Activated CD8-positive, alpha-beta T cell treated with anti-CD3 and anti-CD28 coated beads, Interleukin-2, amount 10 ng/mL, durations not matched to agents 7 days and 5 days (primary cell): ENCODE measurements at regions of chrX and their contacts with region 1.

Region 1: GRCh38 chrX:129781134-129781672 is 1.5 kb downstream of the SASH3 start:
- DNase-seq: peak; percentile 91
- ATAC-seq: peak; percentile 75
- H3K4me3 Mint-ChIP-seq: peak overlapping the region; percentile 89
- H3K27ac Mint-ChIP-seq: peak overlapping the region; percentile 94
- H3K4me1 Mint-ChIP-seq: peaks cover 55% of the 10 kb centered on the region
- H3K27me3 Mint-ChIP-seq: no peaks in the 10 kb centered on the region

Region 2: GRCh38 chrX:129654419-129655165 is 126.6 kb before region 1 on chrX and contains the start of gene APLN:
- CTCF ChIA-PET with region 1: interaction called, 11 read pairs
- POLR2A ChIA-PET with region 1: interaction called, 3 read pairs
- DNase-seq: peak; percentile 26
- ATAC-seq: peak; percentile 79
- H3K4me3 Mint-ChIP-seq: peak within 1 kb of the TSS; percentile 66
- H3K27ac Mint-ChIP-seq: no peak within 1 kb of the TSS
- H3K4me1 Mint-ChIP-seq: peaks cover 7% of the 10 kb centered on the region
- H3K27me3 Mint-ChIP-seq: peaks cover 9% of the 10 kb centered on the region
- total RNA-seq, gene APLN: 2.1 to 2.7 TPM

Region 3: DNA sequence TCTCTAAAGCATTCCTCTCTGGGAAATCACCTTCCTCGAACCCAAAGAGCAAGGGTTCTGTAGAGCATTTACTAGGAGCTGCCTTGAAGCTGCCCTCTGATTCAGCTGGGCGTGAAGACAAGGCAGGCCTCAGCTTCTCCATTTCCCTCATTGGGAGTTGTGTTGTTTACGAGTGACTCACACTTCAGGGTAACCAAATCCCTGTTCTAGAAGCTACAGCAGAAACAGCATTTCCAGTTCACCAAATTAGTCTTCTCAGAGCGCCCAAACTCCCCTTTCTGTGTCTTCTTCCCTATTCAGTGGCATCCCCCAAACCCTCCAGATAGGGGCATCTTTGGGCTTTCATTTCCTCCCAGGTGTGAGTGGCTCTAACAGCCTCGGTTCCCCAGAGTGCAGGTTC is 43.3 kb before region 1 on chrX:
- CTCF ChIA-PET with region 1: interaction called, 11 read pairs
- POLR2A ChIA-PET with region 1: interaction called, 20 read pairs
- DNase-seq: no peak
- ATAC-seq: no peak
- H3K4me3 Mint-ChIP-seq: no peak overlapping the region
- H3K27ac Mint-ChIP-seq: peak overlapping the region; percentile 46
- H3K4me1 Mint-ChIP-seq: peaks cover 57% of the 10 kb centered on the region
- H3K27me3 Mint-ChIP-seq: no peaks in the 10 kb centered on the region

Region 4: GRCh38 chrX:129759576-129760061 is 21.6 kb before region 1 on chrX:
- CTCF ChIA-PET with region 1: interaction called, 40 read pairs
- POLR2A ChIA-PET with region 1: interaction called, 165 read pairs
- DNase-seq: peak; percentile 76
- ATAC-seq: peak; percentile 77
- H3K4me3 Mint-ChIP-seq: peak overlapping the region; percentile 28
- H3K27ac Mint-ChIP-seq: peak overlapping the region; percentile 89
- H3K4me1 Mint-ChIP-seq: peaks cover 75% of the 10 kb centered on the region
- H3K27me3 Mint-ChIP-seq: no peaks in the 10 kb centered on the region

Region 5: DNA sequence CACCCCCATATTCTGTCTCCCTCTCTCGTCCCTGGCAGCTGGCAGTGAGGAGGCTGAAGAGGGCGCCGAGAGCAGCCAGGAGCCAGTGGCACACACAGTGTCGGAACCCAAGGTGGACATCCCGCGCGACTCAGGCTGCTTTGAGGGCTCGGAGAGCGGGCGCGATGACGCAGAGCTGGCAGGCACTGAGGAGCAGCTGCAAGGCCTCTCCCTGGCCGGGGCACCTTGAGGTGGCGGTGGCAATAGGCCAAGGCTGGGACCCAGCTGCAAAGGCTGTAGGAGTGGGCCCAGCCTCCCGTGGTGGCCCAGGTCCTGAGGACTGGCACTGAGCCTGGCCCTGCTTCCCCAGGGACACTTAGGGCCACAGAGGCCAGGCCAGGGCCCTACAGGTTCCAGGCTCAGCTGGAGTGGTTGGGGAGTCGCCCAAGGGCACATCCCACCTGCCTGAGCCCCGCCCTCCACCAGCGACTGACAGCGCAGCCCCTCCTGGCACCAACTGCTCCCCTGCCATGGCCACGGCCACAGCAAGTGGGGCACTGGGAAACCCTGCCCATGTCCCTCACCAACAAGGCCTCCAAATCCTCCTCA is 12.5 kb after region 1 on chrX:
- CTCF ChIA-PET with region 1: no interaction called
- POLR2A ChIA-PET with region 1: interaction called, 49 read pairs
- DNase-seq: no peak
- ATAC-seq: no peak
- H3K4me3 Mint-ChIP-seq: no peak overlapping the region
- H3K27ac Mint-ChIP-seq: peak overlapping the region; percentile 25
- H3K4me1 Mint-ChIP-seq: peaks cover 19% of the 10 kb centered on the region
- H3K27me3 Mint-ChIP-seq: no peaks in the 10 kb centered on the region

Region 6: GRCh38 chrX:129900054-129900453 is 118.9 kb after region 1 on chrX:
- CTCF ChIA-PET with region 1: no interaction called
- POLR2A ChIA-PET with region 1: no interaction called
- DNase-seq: no peak
- ATAC-seq: no peak
- H3K4me3 Mint-ChIP-seq: no peak overlapping the region
- H3K27ac Mint-ChIP-seq: no peak overlapping the region
- H3K4me1 Mint-ChIP-seq: no peaks in the 10 kb centered on the region
- H3K27me3 Mint-ChIP-seq: no peaks in the 10 kb centered on the region